MCF 10A (cell line): ENCODE measurements at regions of chr6 and their contacts with region 1.

Region 1: DNA sequence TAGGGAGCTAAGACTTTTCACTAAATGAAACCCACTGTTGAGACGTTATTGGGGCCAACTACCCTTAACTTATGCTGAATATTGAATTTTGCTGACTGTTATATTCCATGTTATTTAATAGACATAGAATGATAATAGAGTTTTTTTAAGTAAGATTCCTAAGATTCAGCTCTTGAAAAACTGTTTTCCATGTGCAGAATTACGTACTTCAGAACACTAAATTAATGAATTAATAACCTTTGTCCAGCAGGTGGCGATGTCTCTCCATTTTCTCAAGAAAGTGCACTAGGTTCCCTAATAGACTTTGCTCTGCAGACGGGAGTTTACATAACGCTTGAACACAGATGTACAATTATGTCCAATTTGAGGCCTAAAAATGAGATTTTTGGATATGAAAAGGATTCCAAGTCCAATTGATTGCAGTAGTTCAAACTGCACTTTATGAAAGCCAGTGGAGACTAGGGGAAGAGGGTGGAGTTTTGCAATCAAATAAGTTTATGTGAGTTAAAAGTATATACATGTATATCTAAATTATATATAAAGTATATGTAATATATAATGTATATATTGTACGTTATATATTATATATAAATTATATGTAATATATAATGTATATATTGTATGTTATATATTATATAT is 282.1 kb downstream of the UST start:
- DNase-seq: peak; percentile 89
- H3K4me3 Mint-ChIP-seq: no peak overlapping the region
- H3K27ac Mint-ChIP-seq: peak overlapping the region; percentile 8
- H3K4me1 Mint-ChIP-seq: peaks cover 29% of the 10 kb centered on the region
- H3K27me3 Mint-ChIP-seq: no peaks in the 10 kb centered on the region
- CTCF ChIP-seq: peak; percentile 56

Region 2: DNA sequence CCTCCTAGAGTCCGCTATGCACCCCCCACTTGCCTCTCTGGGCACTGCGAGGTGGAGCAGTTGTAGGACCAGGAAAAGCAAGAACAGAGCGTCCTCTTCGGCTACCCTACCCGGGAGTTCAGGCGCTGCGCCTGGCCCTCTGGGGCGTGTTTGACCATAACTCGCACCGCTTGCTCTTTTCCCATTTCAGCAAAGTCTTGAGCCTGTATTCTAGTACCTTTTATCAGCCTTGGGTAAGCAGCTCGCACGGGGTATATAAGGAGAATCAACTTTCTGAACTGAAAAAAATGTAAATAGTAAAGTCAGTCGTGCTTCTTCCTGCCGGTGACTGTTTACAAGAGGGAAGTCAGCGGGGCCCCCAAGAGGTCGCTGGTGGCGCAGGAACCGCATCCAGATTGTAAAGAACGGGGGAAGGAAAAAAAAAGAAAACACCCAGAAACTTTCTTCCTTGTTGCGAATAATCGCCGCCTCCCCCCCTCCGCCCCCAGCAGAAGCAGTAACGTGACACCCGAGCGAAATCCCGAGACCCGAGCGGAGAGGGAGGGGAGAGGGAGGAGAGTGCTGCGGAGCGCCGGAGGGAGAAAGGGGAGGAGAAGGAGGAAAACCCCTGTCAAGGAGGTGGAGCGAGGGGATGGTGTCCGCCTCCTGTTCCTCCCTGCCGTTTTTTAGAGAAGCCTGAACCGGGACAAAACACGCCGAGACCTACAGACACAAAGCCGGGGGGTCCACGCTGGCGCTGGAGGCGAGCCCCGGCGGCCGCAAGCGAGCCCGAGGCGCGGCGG is 282.3 kb before region 1 on chr6 and contains the start of gene UST:
- CTCF ChIA-PET with region 1: interaction called, 9 read pairs
- POLR2A ChIA-PET with region 1: interaction called, 4 read pairs
- intact Hi-C with region 1: loop called (anchors 1 kb)
- DNase-seq: peak; percentile 96
- H3K4me3 Mint-ChIP-seq: peak within 1 kb of the TSS; percentile 88
- H3K27ac Mint-ChIP-seq: peak within 1 kb of the TSS; percentile 74
- H3K4me1 Mint-ChIP-seq: peaks cover 42% of the 10 kb centered on the region
- H3K27me3 Mint-ChIP-seq: no peaks in the 10 kb centered on the region
- CTCF ChIP-seq: peak; percentile 76
- total RNA-seq, gene UST: 10.0 and 10.8 TPM in 2 replicates

Region 3: DNA sequence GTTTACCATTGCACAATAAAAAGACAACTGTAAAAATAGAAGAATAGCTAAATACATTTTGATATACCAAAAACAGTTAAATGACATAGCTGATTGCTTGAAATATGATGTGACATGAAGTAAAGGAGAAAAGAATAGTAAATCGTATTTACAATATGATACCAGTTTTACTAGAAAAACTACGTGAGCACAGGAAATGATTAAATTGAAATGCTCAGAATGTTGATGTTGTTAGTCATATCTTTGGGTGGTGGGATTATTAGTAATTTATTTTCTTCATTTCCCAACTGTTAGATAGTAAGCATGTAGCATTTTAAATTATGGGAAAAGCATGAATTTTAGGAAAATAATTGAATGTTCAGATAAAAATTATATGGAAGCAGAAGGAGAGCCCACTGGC is 20.3 kb after region 1 on chr6:
- CTCF ChIA-PET with region 1: interaction called, 11 read pairs
- POLR2A ChIA-PET with region 1: interaction called, 12 read pairs
- intact Hi-C with region 1: no loop called
- DNase-seq: peak; percentile 4
- H3K4me3 Mint-ChIP-seq: no peak overlapping the region
- H3K27ac Mint-ChIP-seq: peak overlapping the region; percentile 84
- H3K4me1 Mint-ChIP-seq: peaks cover 11% of the 10 kb centered on the region
- H3K27me3 Mint-ChIP-seq: no peaks in the 10 kb centered on the region
- CTCF ChIP-seq: no peak

Region 4: GRCh38 chr6:149082286-149082707 is 53.4 kb after region 1 on chr6:
- CTCF ChIA-PET with region 1: interaction called, 16 read pairs
- POLR2A ChIA-PET with region 1: interaction called, 69 read pairs
- intact Hi-C with region 1: loop called (anchors 1 kb)
- DNase-seq: peak; percentile 78
- H3K4me3 Mint-ChIP-seq: no peak overlapping the region
- H3K27ac Mint-ChIP-seq: no peak overlapping the region
- H3K4me1 Mint-ChIP-seq: peaks cover 11% of the 10 kb centered on the region
- H3K27me3 Mint-ChIP-seq: no peaks in the 10 kb centered on the region
- CTCF ChIP-seq: peak; percentile 72

Region 5: GRCh38 chr6:149419696-149420404 is 391.0 kb after region 1 on chr6:
- CTCF ChIA-PET with region 1: interaction called, 13 read pairs
- POLR2A ChIA-PET with region 1: interaction called, 8 read pairs
- intact Hi-C with region 1: no loop called
- DNase-seq: no peak
- H3K4me3 Mint-ChIP-seq: no peak overlapping the region
- H3K27ac Mint-ChIP-seq: no peak overlapping the region
- H3K4me1 Mint-ChIP-seq: no peaks in the 10 kb centered on the region
- H3K27me3 Mint-ChIP-seq: no peaks in the 10 kb centered on the region
- CTCF ChIP-seq: no peak